OCI-LY7 (cell line): ENCODE measurements at regions of chr2 and their contacts with region 1.

Region 1: DNA sequence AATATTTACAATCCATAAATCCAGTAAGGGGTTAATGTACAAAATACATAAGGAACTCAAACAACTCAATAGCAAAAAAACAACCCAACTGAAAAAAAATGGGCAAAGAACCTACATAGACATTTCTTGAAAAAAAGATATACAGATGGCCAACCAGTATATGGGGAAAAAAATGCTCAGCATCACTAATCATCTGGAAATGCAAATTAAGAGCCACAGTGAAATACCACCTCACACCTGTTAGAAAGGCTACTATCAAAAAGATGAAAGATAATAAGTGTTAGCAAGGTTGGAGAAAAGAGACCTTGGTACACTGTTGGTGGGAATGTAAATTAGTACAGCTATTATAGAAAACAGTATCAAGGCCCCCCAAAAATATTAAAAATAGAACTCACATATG is 14.6 kb downstream of the AP1S3 start:
- DNase-seq: peak; percentile 82
- H3K4me3 ChIP-seq: peak overlapping the region; percentile 39
- H3K27ac ChIP-seq: peak overlapping the region; percentile 86
- H3K4me1 ChIP-seq: peaks cover 98% of the 10 kb centered on the region
- CTCF ChIP-seq: no peak

Region 2: GRCh38 chr2:223805008-223805407 is 17.8 kb before region 1 on chr2:
- CTCF ChIA-PET with region 1: interaction called, 4 read pairs
- POLR2A ChIA-PET with region 1: interaction called, 178 read pairs
- intact Hi-C with region 1: loop called (anchors 2 kb)
- DNase-seq: no peak
- H3K4me3 ChIP-seq: peak overlapping the region; percentile 63
- H3K27ac ChIP-seq: peak overlapping the region; percentile 68
- H3K4me1 ChIP-seq: peaks cover 63% of the 10 kb centered on the region
- CTCF ChIP-seq: no peak